Breast epithelium (tissue), 4 donors: ENCODE measurements at regions of chr18 and their contacts with region 1.

Region 1: GRCh38 chr18:8834881-8835280 is 129.5 kb downstream of the MTCL1 start:
- DNase-seq: no peak
- H3K4me3 ChIP-seq: no peak overlapping the region
- H3K27ac ChIP-seq: no peak overlapping the region
- H3K4me1 ChIP-seq: no peaks in the 10 kb centered on the region
- H3K27me3 ChIP-seq: no peaks in the 10 kb centered on the region
- CTCF ChIP-seq: no peak
- POLR2A ChIP-seq: no peak

Region 2: GRCh38 chr18:10743766-10744165 is 1908.9 kb after region 1 on chr18:
- intact Hi-C with region 1: loop called (anchors 5 kb)
- DNase-seq: no peak
- H3K4me3 ChIP-seq: no peak overlapping the region
- H3K27ac ChIP-seq: no peak overlapping the region
- H3K4me1 ChIP-seq: no peaks in the 10 kb centered on the region
- H3K27me3 ChIP-seq: no peaks in the 10 kb centered on the region
- CTCF ChIP-seq: no peak
- POLR2A ChIP-seq: no peak